ENCODE measurements at regions of chr12 and their contacts with region 1.

Region 1: GRCh38 chr12:9039397-9039977 is 50.1 kb downstream of the KLRG1 start:
- DNase-seq: peak in 7 of 9 donors; percentile 37 to 77 (median 67)
- ATAC-seq: peak; percentile 93
- H3K4me3 ChIP-seq: no peak overlapping the region
- H3K4me3 Mint-ChIP-seq: peak overlapping the region in 7 of 10 donors; percentile 3 to 68 (median 47)
- H3K27ac ChIP-seq: peak overlapping the region; percentile 2
- H3K27ac Mint-ChIP-seq: peak overlapping the region in 8 of 9 donors; percentile 59 to 78 (median 70)
- H3K4me1 ChIP-seq: peaks cover 33 to 40% of the 10 kb centered on the region in 2 donors
- H3K4me1 Mint-ChIP-seq: peaks cover 19 to 61% (median 50%) of the 10 kb centered on the region in 7 donors
- H3K27me3 ChIP-seq: no peaks in the 10 kb centered on the region
- H3K27me3 Mint-ChIP-seq: peaks cover 0 to 19% (median 0%) of the 10 kb centered on the region in 5 donors

Region 2: DNA sequence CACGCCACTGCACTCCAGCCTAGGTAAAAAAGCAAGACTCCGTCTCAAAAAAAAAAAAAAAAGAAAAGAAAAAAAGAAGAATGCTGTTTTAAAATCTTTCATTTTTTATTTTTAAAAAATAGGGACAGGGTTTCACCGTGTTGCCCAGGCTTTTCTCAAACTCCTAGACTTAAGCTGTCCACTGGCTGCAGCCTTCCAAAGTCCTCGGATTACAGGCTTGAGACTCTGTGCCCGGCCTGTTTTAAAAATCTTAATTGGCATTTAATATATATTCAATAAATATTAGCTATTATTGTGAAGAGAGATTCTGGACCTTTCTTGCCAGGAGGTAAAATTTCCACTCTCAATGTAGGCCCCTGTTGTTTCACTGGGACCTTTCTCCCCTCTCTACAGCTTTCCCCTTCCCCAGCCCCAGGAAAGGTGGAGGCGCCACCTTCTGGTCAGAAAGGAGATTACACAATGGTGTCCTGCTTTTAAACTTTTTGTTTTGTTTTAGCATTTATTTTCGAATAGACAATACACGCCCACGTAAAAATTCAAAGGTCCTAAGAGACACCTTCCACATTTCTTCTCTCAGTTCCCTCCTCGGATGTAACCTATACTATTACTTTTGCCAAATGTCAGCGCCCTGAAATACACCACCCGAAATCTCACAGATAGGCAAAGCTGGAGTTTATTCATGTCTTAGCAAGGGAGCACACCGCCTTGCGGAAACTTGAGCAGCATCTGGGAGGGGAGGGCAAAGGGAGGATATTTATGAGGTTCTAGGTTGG is 149.0 kb before region 1 on chr12:
- CTCF ChIA-PET with region 1: interaction called, 9 read pairs
- POLR2A ChIA-PET with region 1: no interaction called
- intact Hi-C with region 1: loop called in 1 of 2 experiments (anchors 1 kb)
- DNase-seq: peak; percentile 29 to 78 (median 61)
- ATAC-seq: peak; percentile 91
- H3K4me3 ChIP-seq: peak overlapping the region; percentile 71
- H3K4me3 Mint-ChIP-seq: peak overlapping the region; percentile 77 to 100 (median 90)
- H3K27ac ChIP-seq: peak overlapping the region; percentile 59
- H3K27ac Mint-ChIP-seq: peak overlapping the region in 8 of 9 donors; percentile 8 to 92 (median 80)
- H3K4me1 ChIP-seq: no peaks in the 10 kb centered on the region
- H3K4me1 Mint-ChIP-seq: peaks cover 0 to 12% (median 5%) of the 10 kb centered on the region in 7 donors
- H3K27me3 ChIP-seq: no peaks in the 10 kb centered on the region
- H3K27me3 Mint-ChIP-seq: peaks cover 0 to 27% (median 0%) of the 10 kb centered on the region in 5 donors

Region 3: GRCh38 chr12:8914716-8915526 is 124.6 kb before region 1 on chr12:
- CTCF ChIA-PET with region 1: interaction called, 4 read pairs
- POLR2A ChIA-PET with region 1: interaction called, 3 read pairs
- intact Hi-C with region 1: loop called in 1 of 2 experiments (anchors 1 kb)
- DNase-seq: peak; percentile 37 to 68 (median 60)
- ATAC-seq: peak; percentile 83
- H3K4me3 ChIP-seq: peak overlapping the region; percentile 73
- H3K4me3 Mint-ChIP-seq: no peak overlapping the region
- H3K27ac ChIP-seq: peak overlapping the region; percentile 79
- H3K27ac Mint-ChIP-seq: no peak overlapping the region
- H3K4me1 ChIP-seq: peaks cover 14 to 25% of the 10 kb centered on the region in 2 donors
- H3K4me1 Mint-ChIP-seq: peaks cover 7 to 20% (median 16%) of the 10 kb centered on the region in 7 donors
- H3K27me3 ChIP-seq: no peaks in the 10 kb centered on the region
- H3K27me3 Mint-ChIP-seq: peaks cover 0 to 16% (median 0%) of the 10 kb centered on the region in 5 donors

Region 4: DNA sequence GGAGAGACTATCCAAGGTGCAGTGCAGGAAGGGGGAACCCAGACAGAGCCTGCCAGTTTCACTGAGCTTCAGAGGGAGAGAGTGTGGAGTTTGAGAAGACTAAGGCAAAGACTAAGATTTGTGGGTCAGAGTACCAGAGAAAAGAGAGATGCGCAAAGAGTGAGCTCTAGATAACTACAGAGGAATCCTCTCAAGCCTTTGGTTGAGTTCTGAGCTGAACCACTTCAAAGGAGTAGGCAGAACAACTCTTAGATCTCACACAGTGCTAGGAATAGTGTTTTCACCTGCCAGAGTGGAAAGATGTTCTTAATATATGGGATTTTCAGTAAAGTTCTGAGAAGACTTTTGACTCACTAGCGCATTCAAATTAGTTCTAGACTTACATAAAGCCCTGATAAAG is 79.3 kb before region 1 on chr12:
- CTCF ChIA-PET with region 1: interaction called, 287 read pairs
- POLR2A ChIA-PET with region 1: interaction called, 105 read pairs
- intact Hi-C with region 1: no loop called
- DNase-seq: peak in 7 of 9 donors; percentile 42 to 68 (median 57)
- ATAC-seq: peak; percentile 94
- H3K4me3 ChIP-seq: peak overlapping the region; percentile 12
- H3K4me3 Mint-ChIP-seq: peak overlapping the region in 9 of 10 donors; percentile 54 to 84 (median 69)
- H3K27ac ChIP-seq: peak overlapping the region; percentile 52
- H3K27ac Mint-ChIP-seq: peak overlapping the region in 8 of 9 donors; percentile 69 to 99 (median 94)
- H3K4me1 ChIP-seq: peaks cover 46 to 69% of the 10 kb centered on the region in 2 donors
- H3K4me1 Mint-ChIP-seq: peaks cover 6 to 93% (median 75%) of the 10 kb centered on the region in 7 donors
- H3K27me3 ChIP-seq: no peaks in the 10 kb centered on the region
- H3K27me3 Mint-ChIP-seq: peaks cover 0 to 5% (median 0%) of the 10 kb centered on the region in 5 donors

Region 5: GRCh38 chr12:8989413-8989812 is 50.1 kb before region 1 on chr12 and contains the start of gene KLRG1:
- CTCF ChIA-PET with region 1: interaction called, 20 read pairs
- POLR2A ChIA-PET with region 1: interaction called, 4 read pairs
- intact Hi-C with region 1: no loop called
- DNase-seq: peak in 2 of 9 donors; percentile 11 to 14
- ATAC-seq: peak; percentile 72
- H3K4me3 ChIP-seq: peak within 1 kb of the TSS; percentile 37
- H3K4me3 Mint-ChIP-seq: peak within 1 kb of the TSS; percentile 12 to 90 (median 77)
- H3K27ac ChIP-seq: peak within 1 kb of the TSS; percentile 27
- H3K27ac Mint-ChIP-seq: peak within 1 kb of the TSS in 8 of 9 donors; percentile 53 to 95 (median 84)
- H3K4me1 ChIP-seq: peaks cover 40 to 58% of the 10 kb centered on the region in 2 donors
- H3K4me1 Mint-ChIP-seq: peaks cover 34 to 78% (median 66%) of the 10 kb centered on the region in 7 donors
- H3K27me3 ChIP-seq: no peaks in the 10 kb centered on the region
- H3K27me3 Mint-ChIP-seq: no peaks in the 10 kb centered on the region
- total RNA-seq, gene KLRG1: 2.8 to 43.8 (median 26.9) TPM

Region 6: GRCh38 chr12:8996682-8997360 is 42.7 kb before region 1 on chr12:
- CTCF ChIA-PET with region 1: interaction called, 20 read pairs
- POLR2A ChIA-PET with region 1: interaction called, 5 read pairs
- intact Hi-C with region 1: loop called in 1 of 2 experiments (anchors 1 kb)
- DNase-seq: peak in 1 of 9 donors; percentile 28
- ATAC-seq: peak; percentile 65
- H3K4me3 ChIP-seq: peak overlapping the region; percentile 25
- H3K4me3 Mint-ChIP-seq: peak overlapping the region in 7 of 10 donors; percentile 11 to 77 (median 27)
- H3K27ac ChIP-seq: no peak overlapping the region
- H3K27ac Mint-ChIP-seq: peak overlapping the region in 8 of 9 donors; percentile 1 to 87 (median 60)
- H3K4me1 ChIP-seq: peaks cover 35 to 44% of the 10 kb centered on the region in 2 donors
- H3K4me1 Mint-ChIP-seq: peaks cover 21 to 81% (median 62%) of the 10 kb centered on the region in 7 donors
- H3K27me3 ChIP-seq: no peaks in the 10 kb centered on the region
- H3K27me3 Mint-ChIP-seq: peaks cover 0 to 3% (median 0%) of the 10 kb centered on the region in 5 donors

Region 7: GRCh38 chr12:9027161-9028059 is 12.1 kb before region 1 on chr12:
- CTCF ChIA-PET with region 1: interaction called, 29 read pairs
- POLR2A ChIA-PET with region 1: interaction called, 29 read pairs
- intact Hi-C with region 1: loop called (anchors 1 kb)
- DNase-seq: peak in 1 of 9 donors; percentile 46
- ATAC-seq: no peak
- H3K4me3 ChIP-seq: no peak overlapping the region
- H3K4me3 Mint-ChIP-seq: peak overlapping the region; percentile 21 to 69 (median 60)
- H3K27ac ChIP-seq: peak overlapping the region; percentile 73
- H3K27ac Mint-ChIP-seq: peak overlapping the region in 3 of 9 donors; percentile 24 to 97 (median 94)
- H3K4me1 ChIP-seq: peaks cover 53 to 69% of the 10 kb centered on the region in 2 donors
- H3K4me1 Mint-ChIP-seq: peaks cover 20 to 57% (median 49%) of the 10 kb centered on the region in 7 donors
- H3K27me3 ChIP-seq: no peaks in the 10 kb centered on the region
- H3K27me3 Mint-ChIP-seq: peaks cover 0 to 2% (median 0%) of the 10 kb centered on the region in 5 donors